MCF 10A (cell line): ENCODE measurements at regions of chr20 and their contacts with region 1.

Region 1: DNA sequence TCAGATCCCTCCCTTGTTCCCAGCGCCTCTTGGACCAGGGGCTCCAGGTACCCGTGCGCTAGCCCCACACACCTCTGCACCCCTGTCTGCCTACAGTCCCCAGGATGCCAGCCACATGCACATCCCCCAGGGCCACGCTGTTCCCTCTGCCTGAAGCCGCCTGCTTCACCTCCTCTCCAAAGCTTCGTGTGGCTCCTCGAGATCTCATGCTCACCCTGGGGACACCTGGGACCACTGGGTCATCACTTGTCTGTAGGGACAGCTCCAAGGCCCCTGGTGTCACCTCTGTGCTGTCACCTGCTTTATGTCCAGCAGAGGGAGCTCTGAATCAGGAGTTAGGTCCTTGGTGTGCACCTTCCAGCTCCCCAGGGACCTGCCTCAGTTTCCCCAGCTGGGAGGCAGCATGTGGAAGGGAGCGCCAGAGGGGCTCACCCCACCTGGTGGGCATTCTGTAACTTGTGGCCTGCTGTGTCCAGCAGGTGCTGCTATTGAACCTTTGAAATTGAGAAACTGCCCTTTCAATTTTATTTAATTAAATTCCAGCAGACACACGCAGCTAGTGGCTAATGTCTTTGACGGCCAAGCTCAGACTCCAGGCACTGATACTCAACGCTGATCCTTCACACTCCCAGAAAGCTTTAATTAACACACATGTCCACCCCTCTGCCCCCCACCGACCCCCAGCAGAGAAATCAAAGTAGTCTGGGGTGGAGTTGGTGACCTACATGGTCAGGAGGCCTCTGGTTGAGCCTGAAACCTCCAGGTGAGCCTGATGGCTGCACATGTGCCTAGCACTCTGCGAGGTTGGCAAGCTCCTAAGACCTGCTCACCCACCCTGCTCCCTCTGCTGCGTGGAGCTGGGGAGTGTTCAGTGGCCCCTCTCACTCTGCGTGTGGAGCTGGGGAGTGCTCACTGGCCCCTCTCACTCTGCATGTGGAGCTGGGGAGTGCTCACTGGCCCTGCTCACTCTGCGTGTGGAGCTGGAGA is 7.6 kb upstream of the YTHDF1 start:
- DNase-seq: peak; percentile 57
- H3K4me3 Mint-ChIP-seq: no peak overlapping the region
- H3K27ac Mint-ChIP-seq: no peak overlapping the region
- H3K4me1 Mint-ChIP-seq: peaks cover 9% of the 10 kb centered on the region
- H3K27me3 Mint-ChIP-seq: peaks cover 17% of the 10 kb centered on the region
- CTCF ChIP-seq: peak; percentile 83

Region 2: DNA sequence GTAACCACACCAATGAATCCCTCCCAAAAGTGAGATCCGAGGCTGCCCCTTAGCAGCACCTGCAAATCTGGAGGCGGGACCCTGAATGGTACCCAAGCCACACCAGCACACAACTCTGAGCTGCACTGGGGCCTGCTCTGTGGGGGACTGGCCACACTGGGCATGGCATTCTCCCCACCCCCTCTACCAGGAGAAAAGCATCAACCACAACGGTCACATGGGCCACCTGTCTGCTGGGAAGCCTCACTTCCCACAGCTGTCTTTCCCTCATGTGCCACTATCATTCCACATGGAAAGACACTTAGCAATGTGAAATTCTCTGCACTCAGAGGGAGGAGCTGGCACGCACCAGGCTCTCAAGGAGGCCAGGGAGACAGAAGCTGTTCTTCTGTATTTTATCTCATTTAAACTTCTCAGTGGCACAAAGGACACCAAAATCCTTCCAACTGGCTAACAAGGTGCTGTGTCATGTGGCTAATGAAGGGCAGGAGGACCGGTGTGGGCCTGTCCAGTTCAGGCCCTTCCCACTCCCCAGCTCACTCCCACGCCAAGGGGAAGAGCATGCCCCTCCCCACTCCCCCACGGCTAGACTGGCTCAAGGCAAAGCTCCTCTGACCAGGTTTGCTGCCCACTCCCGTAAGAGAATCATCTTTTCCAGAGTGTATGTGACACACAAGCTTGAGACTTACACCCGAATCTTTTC is 26.6 kb before region 1 on chr20:
- CTCF ChIA-PET with region 1: interaction called, 16 read pairs
- POLR2A ChIA-PET with region 1: interaction called, 3 read pairs
- intact Hi-C with region 1: no loop called
- DNase-seq: no peak
- H3K4me3 Mint-ChIP-seq: no peak overlapping the region
- H3K27ac Mint-ChIP-seq: no peak overlapping the region
- H3K4me1 Mint-ChIP-seq: no peaks in the 10 kb centered on the region
- H3K27me3 Mint-ChIP-seq: no peaks in the 10 kb centered on the region
- CTCF ChIP-seq: no peak

Region 3: GRCh38 chr20:63246490-63247288 is 23.2 kb after region 1 on chr20:
- CTCF ChIA-PET with region 1: interaction called, 46 read pairs
- POLR2A ChIA-PET with region 1: no interaction called
- intact Hi-C with region 1: no loop called
- DNase-seq: no peak
- H3K4me3 Mint-ChIP-seq: no peak overlapping the region
- H3K27ac Mint-ChIP-seq: no peak overlapping the region
- H3K4me1 Mint-ChIP-seq: peaks cover 6% of the 10 kb centered on the region
- H3K27me3 Mint-ChIP-seq: peaks cover 25% of the 10 kb centered on the region
- CTCF ChIP-seq: no peak

Region 4: DNA sequence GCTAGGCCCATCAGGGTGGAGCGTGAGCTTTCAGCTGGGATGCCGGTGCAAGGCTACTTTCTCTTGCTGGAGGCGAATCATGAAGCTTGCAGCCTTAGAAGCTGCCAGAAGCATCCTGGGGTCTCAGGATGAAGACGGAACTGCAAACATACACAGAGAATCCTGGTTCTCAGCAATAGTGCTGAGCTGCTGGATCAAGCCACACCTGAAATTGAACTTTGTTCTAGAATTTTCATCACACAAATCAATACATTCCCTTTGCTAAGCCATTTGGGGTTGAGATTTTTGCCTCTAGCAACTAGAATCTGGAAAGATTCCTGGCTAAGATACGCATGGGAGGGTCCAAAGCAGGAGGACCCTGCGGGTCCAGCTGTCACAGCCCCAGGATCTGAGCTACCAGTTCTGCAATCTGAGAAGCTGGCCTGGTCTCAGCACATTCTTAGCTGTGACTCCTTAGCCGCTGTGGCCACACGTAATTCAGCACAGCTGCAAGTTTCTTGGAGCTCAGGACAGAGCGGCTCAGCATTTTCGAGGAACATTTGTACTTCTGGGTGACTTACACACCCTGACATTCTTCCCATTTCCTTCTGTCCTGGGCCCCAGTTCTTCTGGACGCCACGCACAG is 42.5 kb after region 1 on chr20:
- CTCF ChIA-PET with region 1: interaction called, 60 read pairs
- POLR2A ChIA-PET with region 1: no interaction called
- intact Hi-C with region 1: no loop called
- DNase-seq: no peak
- H3K4me3 Mint-ChIP-seq: no peak overlapping the region
- H3K27ac Mint-ChIP-seq: no peak overlapping the region
- H3K4me1 Mint-ChIP-seq: no peaks in the 10 kb centered on the region
- H3K27me3 Mint-ChIP-seq: peaks cover 37% of the 10 kb centered on the region
- CTCF ChIP-seq: no peak

Region 5: GRCh38 chr20:63295422-63295821 is 71.9 kb after region 1 on chr20:
- CTCF ChIA-PET with region 1: interaction called, 11 read pairs
- POLR2A ChIA-PET with region 1: no interaction called
- intact Hi-C with region 1: no loop called
- DNase-seq: no peak
- H3K4me3 Mint-ChIP-seq: no peak overlapping the region
- H3K27ac Mint-ChIP-seq: no peak overlapping the region
- H3K4me1 Mint-ChIP-seq: no peaks in the 10 kb centered on the region
- H3K27me3 Mint-ChIP-seq: peaks cover 31% of the 10 kb centered on the region
- CTCF ChIP-seq: no peak

Region 6: GRCh38 chr20:63344616-63345327 is 121.3 kb after region 1 on chr20:
- CTCF ChIA-PET with region 1: no interaction called
- POLR2A ChIA-PET with region 1: no interaction called
- intact Hi-C with region 1: no loop called
- DNase-seq: no peak
- H3K4me3 Mint-ChIP-seq: no peak overlapping the region
- H3K27ac Mint-ChIP-seq: no peak overlapping the region
- H3K4me1 Mint-ChIP-seq: no peaks in the 10 kb centered on the region
- H3K27me3 Mint-ChIP-seq: peaks cover 16% of the 10 kb centered on the region
- CTCF ChIP-seq: no peak

Region 7: GRCh38 chr20:63372971-63373885 is 149.7 kb after region 1 on chr20:
- CTCF ChIA-PET with region 1: interaction called, 24 read pairs
- POLR2A ChIA-PET with region 1: no interaction called
- intact Hi-C with region 1: no loop called
- DNase-seq: no peak
- H3K4me3 Mint-ChIP-seq: no peak overlapping the region
- H3K27ac Mint-ChIP-seq: no peak overlapping the region
- H3K4me1 Mint-ChIP-seq: no peaks in the 10 kb centered on the region
- H3K27me3 Mint-ChIP-seq: peaks cover 84% of the 10 kb centered on the region
- CTCF ChIP-seq: no peak